ENCODE measurements at regions of chr1 and their contacts with region 1.

Region 1: DNA sequence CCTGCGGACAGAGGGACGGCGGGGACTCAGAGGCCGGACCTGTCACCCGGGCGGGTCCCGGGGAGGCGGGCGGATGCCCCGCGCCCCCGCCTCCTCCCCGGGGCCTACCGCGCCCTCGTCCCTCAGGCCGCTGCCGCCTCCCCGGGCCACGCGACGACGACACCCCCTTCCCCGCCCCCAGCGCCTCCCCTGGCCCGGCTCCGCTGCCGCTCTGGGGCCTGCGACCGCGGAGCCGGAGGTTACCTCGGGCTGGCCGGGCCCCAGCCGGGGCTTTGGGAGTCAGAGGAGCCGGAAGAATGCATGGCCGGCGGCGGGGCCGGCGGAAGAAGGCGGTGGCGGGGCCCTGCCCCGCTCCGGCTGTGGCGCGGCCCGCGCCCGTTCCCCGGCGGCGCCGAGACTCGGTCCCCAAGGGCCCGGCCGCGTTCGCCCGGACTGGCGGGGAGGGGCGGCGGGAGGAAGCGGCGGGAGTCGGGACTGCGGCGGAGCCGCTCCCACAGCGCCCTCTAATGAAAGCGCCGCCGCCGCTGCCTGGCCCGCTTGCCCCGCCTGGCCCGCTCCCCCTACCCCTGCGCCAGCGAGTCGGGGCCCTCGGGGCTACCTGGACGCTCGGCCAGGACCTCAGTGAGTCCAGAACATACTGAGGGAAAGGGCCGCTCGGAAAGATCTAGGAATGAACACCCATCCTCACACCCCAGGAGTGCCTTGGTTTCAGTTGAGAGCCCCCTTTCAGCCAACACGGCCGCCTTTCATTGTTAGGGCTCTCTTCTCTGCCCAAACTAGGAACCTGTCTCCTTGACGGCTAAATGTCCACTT is at the start of gene LPGAT1:
- DNase-seq: peak; percentile 55 to 88 (median 78)
- H3K4me3 ChIP-seq: peak within 1 kb of the TSS; percentile 52 to 87 (median 73)
- H3K27ac ChIP-seq: peak within 1 kb of the TSS; percentile 76 to 97 (median 91)
- H3K27me3 ChIP-seq: no peaks in the 10 kb centered on the region
- CTCF ChIP-seq: peak; percentile 19 to 93 (median 76)
- total RNA-seq, gene LPGAT1: 38.8 to 131 (median 83.4) TPM

Region 2: DNA sequence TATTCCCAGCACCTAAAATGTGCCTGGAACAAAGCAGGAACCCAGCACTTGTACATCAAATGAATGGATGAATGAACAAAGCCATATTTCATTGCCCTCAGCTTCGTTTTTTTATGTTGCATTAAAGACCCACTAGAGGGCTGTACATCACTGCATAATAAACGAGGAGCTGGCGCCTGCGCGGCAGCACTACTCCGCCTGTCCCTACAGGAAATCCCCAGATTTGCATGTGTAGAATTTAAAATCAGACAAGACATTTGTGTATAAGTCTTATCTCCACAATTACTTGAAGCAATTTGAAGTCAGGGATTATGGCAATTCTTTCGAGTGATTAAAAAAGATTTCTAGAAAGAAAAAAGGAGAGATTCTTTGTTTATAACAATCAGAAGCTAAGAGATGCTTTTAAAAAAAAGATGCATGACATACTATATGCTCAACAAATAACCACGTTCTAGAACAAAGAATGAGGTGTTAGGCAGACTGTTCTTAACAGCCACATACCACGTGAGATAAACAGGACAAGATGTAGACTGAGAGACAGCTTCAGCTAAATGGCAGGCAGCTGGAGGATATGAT is 149.7 kb before region 1 on chr1:
- intact Hi-C with region 1: loop called (anchors 1 to 5 kb)
- DNase-seq: peak; percentile 57 to 85 (median 80)
- H3K4me3 ChIP-seq: peak overlapping the region in 4 of 59 donors; percentile 2 to 20 (median 15)
- H3K27ac ChIP-seq: peak overlapping the region in 38 of 59 donors; percentile 1 to 85 (median 48)
- H3K27me3 ChIP-seq: no peaks in the 10 kb centered on the region
- CTCF ChIP-seq: peak; percentile 67 to 95 (median 85)

Region 3: DNA sequence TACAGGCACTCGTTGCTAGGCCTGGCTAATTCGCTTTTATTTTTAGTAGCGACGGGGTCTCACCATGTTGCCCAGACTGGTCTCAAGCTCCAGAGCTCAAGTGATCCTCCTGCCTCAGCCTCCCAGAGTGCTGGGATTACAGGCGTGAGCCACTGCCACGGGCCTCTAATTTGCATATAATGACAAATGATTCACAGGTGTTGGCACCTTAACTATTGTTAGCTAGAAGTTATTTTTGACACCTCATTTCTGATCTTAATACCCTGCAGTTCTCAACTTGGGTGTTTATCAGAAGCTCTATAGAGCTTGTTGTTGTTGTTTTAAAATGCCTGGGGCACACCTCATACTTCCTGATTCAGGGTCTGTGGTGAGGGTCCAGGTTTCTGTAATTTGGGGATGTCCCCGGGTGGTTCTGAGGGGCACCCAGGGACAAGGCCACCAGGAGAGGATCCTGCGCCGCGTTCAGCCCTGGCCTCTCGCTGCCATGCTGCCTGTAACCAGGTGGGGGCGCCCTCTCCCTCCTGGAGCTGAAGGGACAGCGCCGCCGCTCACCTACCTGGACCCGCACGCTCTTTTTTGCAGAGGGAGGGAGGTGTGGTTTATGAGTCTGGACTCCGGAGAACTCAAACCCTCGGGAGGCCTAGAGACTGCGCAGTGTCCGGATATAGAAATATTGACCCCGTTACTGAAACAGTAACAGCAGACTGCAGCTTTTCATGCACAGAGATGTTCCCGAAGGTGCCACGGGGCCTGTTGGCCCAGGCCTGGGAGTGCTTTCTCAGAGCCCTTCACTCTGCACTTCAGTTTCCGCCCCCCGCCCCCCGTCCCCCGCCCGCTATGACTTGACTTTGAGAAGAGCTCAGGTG is 132.1 kb before region 1 on chr1:
- intact Hi-C with region 1: loop called (anchors 1 kb)
- DNase-seq: peak; percentile 66 to 88 (median 85)
- H3K4me3 ChIP-seq: peak overlapping the region in 56 of 59 donors; percentile 15 to 63 (median 37)
- H3K27ac ChIP-seq: peak overlapping the region in 54 of 59 donors; percentile 6 to 86 (median 68)
- H3K27me3 ChIP-seq: peaks cover 0 to 3% (median 0%) of the 10 kb centered on the region in 45 donors
- CTCF ChIP-seq: peak; percentile 87 to 100 (median 96)

Region 4: GRCh38 chr1:211735208-211736170 is 95.0 kb before region 1 on chr1:
- intact Hi-C with region 1: loop called (anchors 1 to 2 kb)
- DNase-seq: peak in 9 of 10 donors; percentile 61 to 84 (median 79)
- H3K4me3 ChIP-seq: peak overlapping the region in 2 of 59 donors; percentile 4 to 21
- H3K27ac ChIP-seq: peak overlapping the region; percentile 78 to 100 (median 97)
- H3K27me3 ChIP-seq: no peaks in the 10 kb centered on the region
- CTCF ChIP-seq: peak in 2 of 56 donors; percentile 3 to 18

Region 5: GRCh38 chr1:211788626-211789025 is 41.9 kb before region 1 on chr1:
- intact Hi-C with region 1: loop called in 1 of 2 experiments (anchors 5 kb)
- DNase-seq: no peak
- H3K4me3 ChIP-seq: peak overlapping the region in 3 of 59 donors; percentile 3 to 12 (median 4)
- H3K27ac ChIP-seq: peak overlapping the region in 53 of 59 donors; percentile 20 to 95 (median 82)
- H3K27me3 ChIP-seq: no peaks in the 10 kb centered on the region
- CTCF ChIP-seq: no peak

Region 6: GRCh38 chr1:211991695-211992094 is 161.2 kb after region 1 on chr1:
- intact Hi-C with region 1: no loop called
- DNase-seq: no peak
- H3K4me3 ChIP-seq: no peak overlapping the region
- H3K27ac ChIP-seq: no peak overlapping the region
- H3K27me3 ChIP-seq: no peaks in the 10 kb centered on the region
- CTCF ChIP-seq: no peak

Region 7: DNA sequence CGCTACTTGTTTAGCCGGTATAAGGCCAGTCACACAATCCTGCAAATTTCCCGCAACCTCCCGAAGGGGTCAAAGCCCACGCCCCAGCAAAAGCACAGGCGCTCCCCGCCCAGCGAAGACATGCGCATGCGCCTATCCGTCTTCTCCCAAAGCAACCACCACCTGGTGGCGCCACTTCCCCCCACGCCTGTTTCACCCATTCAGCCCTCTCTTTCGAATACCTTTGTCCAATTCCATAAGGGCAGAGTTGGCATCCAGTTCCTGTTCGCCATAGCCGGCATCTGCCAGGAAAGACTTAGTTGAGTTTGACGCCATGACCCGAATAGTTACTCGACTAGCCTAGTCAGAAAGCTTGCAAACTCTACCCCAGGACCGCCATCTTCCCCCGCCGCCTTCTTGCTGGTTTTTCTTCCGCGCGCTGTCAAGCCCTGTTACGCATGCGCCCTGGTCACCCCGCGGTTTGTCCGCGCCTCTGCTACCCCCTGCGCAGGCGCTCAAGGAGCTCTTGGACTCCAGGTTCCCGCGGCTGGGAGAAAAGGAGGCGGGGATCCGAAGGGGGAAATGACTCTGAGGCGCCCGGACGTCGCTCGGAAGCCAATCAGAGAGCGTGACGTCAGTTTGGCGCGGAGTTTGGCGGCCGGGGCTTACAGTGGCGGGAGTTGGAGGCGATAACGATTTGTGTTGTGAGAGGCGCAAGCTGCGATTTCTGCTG is 204.7 kb after region 1 on chr1 and contains the starts of genes DTL and INTS7:
- intact Hi-C with region 1: loop called in 1 of 2 experiments (anchors 5 kb)
- DNase-seq: peak; percentile 94 to 98 (median 97)
- H3K4me3 ChIP-seq: peak within 1 kb of the TSS; percentile 41 to 91 (median 71)
- H3K27ac ChIP-seq: peak within 1 kb of the TSS; percentile 74 to 99 (median 95)
- H3K27me3 ChIP-seq: peaks cover 0 to 8% (median 0%) of the 10 kb centered on the region in 45 donors
- CTCF ChIP-seq: peak; percentile 75 to 99 (median 92)
- total RNA-seq, gene DTL: 0.11 to 3.4 (median 0.62) TPM in 96 of 120 experiments, not detected in the others
- total RNA-seq, gene INTS7: 9.6 to 23.7 (median 16.5) TPM

Measured in dorsolateral prefrontal cortex (tissue), 120 donors.